ENCODE measurements at regions of chr20 and their contacts with region 1.

Region 1: GRCh38 chr20:51661609-51662178 is 106.5 kb downstream of the ATP9A start:
- DNase-seq: peak; percentile 79
- H3K4me3 ChIP-seq: no peak overlapping the region
- H3K27ac ChIP-seq: peak overlapping the region; percentile 98
- H3K4me1 ChIP-seq: peaks cover 32% of the 10 kb centered on the region
- H3K27me3 ChIP-seq: no peaks in the 10 kb centered on the region
- CTCF ChIP-seq: no peak
- POLR2A ChIP-seq: no peak

Region 2: GRCh38 chr20:51385646-51386530 is 275.8 kb before region 1 on chr20:
- CTCF ChIA-PET with region 1: no interaction called
- POLR2A ChIA-PET with region 1: no interaction called
- dilution Hi-C with region 1: no loop called
- intact Hi-C with region 1: no loop called
- DNase-seq: peak; percentile 67
- H3K4me3 ChIP-seq: no peak overlapping the region
- H3K27ac ChIP-seq: no peak overlapping the region
- H3K4me1 ChIP-seq: peaks cover 63% of the 10 kb centered on the region
- H3K27me3 ChIP-seq: no peaks in the 10 kb centered on the region
- CTCF ChIP-seq: peak; percentile 52 to 78
- POLR2A ChIP-seq: no peak

Region 3: DNA sequence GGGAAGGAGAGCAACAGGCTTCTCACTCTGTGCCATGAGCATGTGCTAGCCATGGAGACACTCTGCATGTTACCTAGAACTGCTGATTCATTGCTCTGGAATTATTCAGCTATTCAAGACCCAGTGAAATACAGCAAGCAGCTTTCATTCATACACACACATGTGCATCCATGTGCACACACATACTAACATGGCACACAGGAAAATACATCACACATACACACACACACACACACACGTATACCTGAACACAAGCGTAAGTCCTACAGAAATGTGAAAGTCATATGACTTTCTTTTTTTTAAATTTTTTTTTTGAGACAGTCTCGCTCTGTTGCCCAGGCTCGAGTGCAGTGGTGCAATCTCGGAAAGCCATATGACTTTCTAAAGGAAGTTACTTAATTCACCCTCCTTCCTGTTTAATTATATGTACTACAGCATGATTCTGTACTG is 11.0 kb before region 1 on chr20:
- CTCF ChIA-PET with region 1: interaction called, 11 read pairs
- POLR2A ChIA-PET with region 1: interaction called, 9 read pairs
- dilution Hi-C with region 1: no loop called
- intact Hi-C with region 1: loop called (anchors 1 kb)
- DNase-seq: peak; percentile 85
- H3K4me3 ChIP-seq: no peak overlapping the region
- H3K27ac ChIP-seq: peak overlapping the region; percentile 21
- H3K4me1 ChIP-seq: peaks cover 24% of the 10 kb centered on the region
- H3K27me3 ChIP-seq: no peaks in the 10 kb centered on the region
- CTCF ChIP-seq: no peak
- POLR2A ChIP-seq: no peak

Measured in endothelial cell of umbilical vein (primary cell).